Sigmoid colon (tissue), 7 donors: ENCODE measurements at regions of chr2 and their contacts with region 1.

Region 1: GRCh38 chr2:102841107-102841840 is 79.4 kb downstream of the TMEM182 start:
- DNase-seq: peak; percentile 66
- H3K4me3 ChIP-seq: no peak overlapping the region
- H3K27ac ChIP-seq: no peak overlapping the region
- H3K4me1 ChIP-seq: peaks cover 0 to 3% (median 0%) of the 10 kb centered on the region in 4 donors
- H3K27me3 ChIP-seq: no peaks in the 10 kb centered on the region
- CTCF ChIP-seq: peak in 3 of 4 experiments; percentile 33 to 52 (median 34)
- EP300 ChIP-seq: no peak
- POLR2A ChIP-seq: no peak

Region 2: DNA sequence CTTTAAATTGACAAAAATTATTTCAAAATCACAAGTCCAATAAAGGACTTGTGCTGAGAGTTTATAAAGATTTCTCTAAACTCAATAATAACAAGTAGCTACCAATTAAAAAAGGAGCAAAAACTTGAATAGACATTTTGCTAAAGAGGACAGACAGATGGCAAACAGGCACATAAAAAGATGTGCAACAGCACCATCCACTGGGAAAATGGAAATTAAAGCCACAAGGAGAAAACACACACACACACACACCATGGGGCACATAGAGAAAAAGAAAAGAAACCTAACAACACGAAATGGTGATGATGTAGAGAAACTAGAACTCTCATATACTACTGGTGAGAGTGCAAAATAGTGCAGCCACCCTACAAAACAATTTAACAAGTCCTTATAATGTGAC is 380.8 kb before region 1 on chr2:
- intact Hi-C with region 1: no loop called
- DNase-seq: no peak
- H3K4me3 ChIP-seq: no peak overlapping the region
- H3K27ac ChIP-seq: no peak overlapping the region
- H3K4me1 ChIP-seq: no peaks in the 10 kb centered on the region
- H3K27me3 ChIP-seq: no peaks in the 10 kb centered on the region
- CTCF ChIP-seq: no peak
- EP300 ChIP-seq: no peak
- POLR2A ChIP-seq: no peak

Region 3: GRCh38 chr2:102872388-102872787 is 31.1 kb after region 1 on chr2:
- intact Hi-C with region 1: loop called (anchors 2 kb)
- DNase-seq: no peak
- H3K4me3 ChIP-seq: no peak overlapping the region
- H3K27ac ChIP-seq: no peak overlapping the region
- H3K4me1 ChIP-seq: no peaks in the 10 kb centered on the region
- H3K27me3 ChIP-seq: no peaks in the 10 kb centered on the region
- CTCF ChIP-seq: peak in 1 of 4 experiments; percentile 27
- EP300 ChIP-seq: no peak
- POLR2A ChIP-seq: no peak

Region 4: DNA sequence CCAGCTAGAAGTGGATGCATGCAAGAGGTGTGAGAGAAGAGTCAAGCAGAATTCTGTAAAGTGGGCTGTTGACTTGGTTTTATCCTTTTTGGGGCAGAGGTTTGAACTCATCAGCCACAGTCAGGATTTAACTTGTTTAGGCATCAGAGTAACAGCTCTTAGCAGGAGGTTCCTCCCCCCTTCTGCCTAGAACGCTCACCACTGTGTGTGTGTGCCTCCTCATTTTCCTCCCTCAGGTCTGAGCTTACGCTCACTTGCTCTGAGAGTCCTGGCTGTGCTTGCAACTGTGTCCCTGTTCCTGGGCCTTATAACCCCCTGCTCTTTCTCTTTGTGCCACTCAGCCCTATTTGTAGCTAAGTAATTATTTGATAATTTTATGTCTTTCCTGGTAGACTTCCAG is 88.4 kb after region 1 on chr2:
- intact Hi-C with region 1: loop called (anchors 5 kb)
- DNase-seq: no peak
- H3K4me3 ChIP-seq: no peak overlapping the region
- H3K27ac ChIP-seq: no peak overlapping the region
- H3K4me1 ChIP-seq: peaks cover 0 to 32% (median 10%) of the 10 kb centered on the region in 4 donors
- H3K27me3 ChIP-seq: no peaks in the 10 kb centered on the region
- CTCF ChIP-seq: no peak
- EP300 ChIP-seq: no peak
- POLR2A ChIP-seq: no peak

Region 5: GRCh38 chr2:103161456-103162289 is 320.4 kb after region 1 on chr2:
- intact Hi-C with region 1: loop called (anchors 5 kb)
- DNase-seq: no peak
- H3K4me3 ChIP-seq: no peak overlapping the region
- H3K27ac ChIP-seq: no peak overlapping the region
- H3K4me1 ChIP-seq: no peaks in the 10 kb centered on the region
- H3K27me3 ChIP-seq: peaks cover 0 to 3% (median 0%) of the 10 kb centered on the region in 3 donors
- CTCF ChIP-seq: peak; percentile 30 to 62 (median 52)
- EP300 ChIP-seq: no peak
- POLR2A ChIP-seq: no peak